ENCODE measurements at regions of chr16 and their contacts with region 1.

Region 1: DNA sequence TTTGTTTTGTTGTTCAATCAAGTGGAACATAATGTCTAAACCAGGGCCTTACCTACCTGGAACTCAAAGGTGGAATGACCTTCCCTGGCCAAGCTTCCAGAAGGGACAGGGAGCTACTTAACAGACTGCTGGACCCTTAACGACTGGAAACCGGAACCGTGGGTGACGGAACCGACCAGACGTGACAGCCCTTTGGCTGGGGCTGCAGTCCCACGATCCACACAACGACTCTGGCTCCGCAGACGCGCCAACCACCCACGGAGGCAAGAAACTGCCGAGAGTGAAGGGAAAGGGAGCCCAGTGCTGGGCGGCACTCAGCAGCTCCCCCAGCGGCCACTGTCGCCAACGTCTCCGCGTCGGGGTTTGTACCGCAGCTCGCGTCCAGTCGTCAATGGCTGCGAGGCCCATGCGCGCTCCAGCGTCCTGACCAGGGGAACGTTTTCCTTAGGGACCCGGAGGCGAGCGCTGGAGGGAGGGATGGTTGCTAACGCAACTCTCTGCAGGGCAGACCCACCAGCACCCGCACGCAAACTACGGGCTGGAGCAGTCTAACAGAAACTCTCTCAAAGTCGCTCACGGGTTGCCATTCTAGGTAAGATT is 5.5 kb upstream of the KIF22 start:
- DNase-seq: peak; percentile 55 to 79 (median 62)
- H3K4me3 ChIP-seq: peak overlapping the region; percentile 33
- H3K4me3 Mint-ChIP-seq: peak overlapping the region; percentile 50 to 77 (median 69)
- H3K27ac ChIP-seq: no peak overlapping the region
- H3K27ac Mint-ChIP-seq: peak overlapping the region in 7 of 8 donors; percentile 47 to 83 (median 74)
- H3K4me1 ChIP-seq: peaks cover 20% of the 10 kb centered on the region
- H3K4me1 Mint-ChIP-seq: peaks cover 17 to 28% (median 27%) of the 10 kb centered on the region in 3 donors
- H3K27me3 ChIP-seq: no peaks in the 10 kb centered on the region
- H3K27me3 Mint-ChIP-seq: peaks cover 0 to 3% of the 10 kb centered on the region in 2 donors

Region 2: DNA sequence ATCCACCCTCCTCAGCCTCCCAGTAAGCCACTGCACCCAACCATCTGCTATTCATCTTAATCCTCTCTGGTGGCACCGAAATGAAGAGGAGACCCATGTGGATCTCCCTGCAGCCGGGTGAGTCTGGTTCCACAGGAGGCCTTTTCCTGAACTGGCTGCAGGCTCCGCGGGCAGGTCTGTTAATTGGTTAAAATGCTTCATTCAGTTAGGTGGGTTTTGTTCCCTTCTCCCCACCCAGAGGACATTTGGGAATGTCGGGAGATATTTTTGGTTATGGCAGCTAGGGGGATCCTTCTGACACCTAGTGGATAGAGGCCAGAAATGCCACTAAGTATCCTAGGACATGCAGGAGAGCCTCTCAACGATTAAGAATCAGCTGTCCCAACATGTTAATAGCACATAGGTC is 55.9 kb before region 1 on chr16:
- CTCF ChIA-PET with region 1: interaction called, 28 read pairs
- POLR2A ChIA-PET with region 1: interaction called, 4 read pairs
- DNase-seq: no peak
- H3K4me3 ChIP-seq: no peak overlapping the region
- H3K4me3 Mint-ChIP-seq: peak overlapping the region in 1 of 7 donors; percentile 46
- H3K27ac ChIP-seq: no peak overlapping the region
- H3K27ac Mint-ChIP-seq: no peak overlapping the region
- H3K4me1 ChIP-seq: peaks cover 9% of the 10 kb centered on the region
- H3K4me1 Mint-ChIP-seq: peaks cover 19 to 30% (median 30%) of the 10 kb centered on the region in 3 donors
- H3K27me3 ChIP-seq: no peaks in the 10 kb centered on the region
- H3K27me3 Mint-ChIP-seq: peaks cover 0 to 1% of the 10 kb centered on the region in 2 donors

Region 3: DNA sequence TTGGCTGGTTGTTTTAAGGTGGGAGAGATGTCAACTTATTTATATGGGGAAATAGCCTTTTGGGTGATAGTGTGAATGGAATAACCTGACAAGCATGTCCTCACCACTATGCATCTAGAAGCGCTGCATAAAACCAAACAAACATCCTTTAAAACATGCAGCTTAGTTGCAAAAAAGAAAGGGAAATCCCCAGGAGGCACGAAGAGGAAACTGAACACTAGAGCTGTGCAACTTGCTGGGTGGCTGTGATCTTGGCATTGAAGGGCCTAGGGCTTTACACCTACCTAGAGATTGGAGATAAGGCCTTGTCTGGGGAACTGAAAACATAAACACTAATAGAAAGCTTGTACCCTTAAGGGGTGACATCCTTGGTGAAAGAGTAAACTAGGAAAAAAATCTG is 46.5 kb before region 1 on chr16:
- CTCF ChIA-PET with region 1: interaction called, 28 read pairs
- POLR2A ChIA-PET with region 1: interaction called, 24 read pairs
- DNase-seq: peak; percentile 35 to 80 (median 79)
- H3K4me3 ChIP-seq: no peak overlapping the region
- H3K4me3 Mint-ChIP-seq: peak overlapping the region; percentile 24 to 78 (median 67)
- H3K27ac ChIP-seq: peak overlapping the region; percentile 21
- H3K27ac Mint-ChIP-seq: peak overlapping the region; percentile 89 to 98 (median 96)
- H3K4me1 ChIP-seq: peaks cover 78% of the 10 kb centered on the region
- H3K4me1 Mint-ChIP-seq: peaks cover 78 to 85% (median 82%) of the 10 kb centered on the region in 3 donors
- H3K27me3 ChIP-seq: no peaks in the 10 kb centered on the region
- H3K27me3 Mint-ChIP-seq: no peaks in the 10 kb centered on the region

Region 4: GRCh38 chr16:29757950-29758466 is 27.0 kb before region 1 on chr16:
- CTCF ChIA-PET with region 1: interaction called, 14 read pairs
- POLR2A ChIA-PET with region 1: interaction called, 4 read pairs
- DNase-seq: no peak
- H3K4me3 ChIP-seq: no peak overlapping the region
- H3K4me3 Mint-ChIP-seq: no peak overlapping the region
- H3K27ac ChIP-seq: no peak overlapping the region
- H3K27ac Mint-ChIP-seq: no peak overlapping the region
- H3K4me1 ChIP-seq: peaks cover 22% of the 10 kb centered on the region
- H3K4me1 Mint-ChIP-seq: peaks cover 9 to 33% (median 19%) of the 10 kb centered on the region in 3 donors
- H3K27me3 ChIP-seq: no peaks in the 10 kb centered on the region
- H3K27me3 Mint-ChIP-seq: no peaks in the 10 kb centered on the region

Region 5: DNA sequence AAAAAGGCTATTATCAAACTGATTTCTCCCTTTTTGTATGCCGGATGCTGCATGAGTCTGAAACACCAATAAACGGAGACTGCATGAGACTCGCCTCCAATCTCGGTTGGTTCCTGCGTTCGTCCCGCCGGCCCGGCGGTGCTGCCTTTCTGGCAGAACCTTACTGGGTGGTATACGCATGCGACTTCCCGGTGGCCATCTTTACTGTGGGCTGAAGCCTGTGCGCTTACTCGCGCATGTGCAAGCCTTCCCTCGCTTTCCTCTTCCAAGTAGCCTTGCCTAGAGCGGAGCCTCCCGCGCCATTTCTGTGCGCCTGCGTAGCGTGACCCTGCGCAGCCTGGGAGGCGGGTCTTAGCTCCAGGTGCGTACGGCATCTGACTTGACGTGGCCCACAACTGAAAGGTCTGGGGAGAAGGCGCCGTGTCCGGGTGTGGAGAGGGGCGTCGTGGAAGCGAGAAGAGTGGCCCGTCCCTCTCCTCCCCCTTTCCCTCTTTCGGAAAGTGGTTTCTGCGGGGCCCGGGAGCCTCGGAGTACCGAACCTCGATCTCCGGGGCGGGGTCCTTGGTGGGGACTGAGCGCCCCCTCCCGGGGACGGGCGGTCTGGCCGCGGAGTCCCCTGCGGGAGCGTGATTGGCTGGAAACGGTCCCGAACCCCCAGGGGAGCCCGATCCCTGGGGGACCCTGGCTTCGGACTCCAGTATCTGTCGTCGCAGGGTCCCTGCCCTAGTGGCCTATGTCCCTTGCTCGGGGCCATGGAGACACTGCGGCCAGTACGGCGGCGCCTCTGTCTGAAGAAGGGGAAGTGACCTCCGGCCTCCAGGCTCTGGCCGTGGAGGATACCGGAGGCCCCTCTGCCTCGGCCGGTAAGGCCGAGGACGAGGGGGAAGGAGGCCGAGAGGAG is 31.0 kb after region 1 on chr16 and contains the start of gene PAGR1:
- CTCF ChIA-PET with region 1: interaction called, 20 read pairs
- POLR2A ChIA-PET with region 1: interaction called, 46 read pairs
- DNase-seq: peak; percentile 95 to 99 (median 99)
- H3K4me3 ChIP-seq: peak within 1 kb of the TSS; percentile 94
- H3K4me3 Mint-ChIP-seq: peak within 1 kb of the TSS; percentile 89 to 99 (median 93)
- H3K27ac ChIP-seq: peak within 1 kb of the TSS; percentile 89
- H3K27ac Mint-ChIP-seq: peak within 1 kb of the TSS; percentile 93 to 99 (median 98)
- H3K4me1 ChIP-seq: peaks cover 54% of the 10 kb centered on the region
- H3K4me1 Mint-ChIP-seq: peaks cover 53 to 79% (median 62%) of the 10 kb centered on the region in 3 donors
- H3K27me3 ChIP-seq: no peaks in the 10 kb centered on the region
- H3K27me3 Mint-ChIP-seq: peaks cover 0 to 4% of the 10 kb centered on the region in 2 donors
- total RNA-seq, gene PAGR1: 41.9 to 44.3 TPM

Region 6: DNA sequence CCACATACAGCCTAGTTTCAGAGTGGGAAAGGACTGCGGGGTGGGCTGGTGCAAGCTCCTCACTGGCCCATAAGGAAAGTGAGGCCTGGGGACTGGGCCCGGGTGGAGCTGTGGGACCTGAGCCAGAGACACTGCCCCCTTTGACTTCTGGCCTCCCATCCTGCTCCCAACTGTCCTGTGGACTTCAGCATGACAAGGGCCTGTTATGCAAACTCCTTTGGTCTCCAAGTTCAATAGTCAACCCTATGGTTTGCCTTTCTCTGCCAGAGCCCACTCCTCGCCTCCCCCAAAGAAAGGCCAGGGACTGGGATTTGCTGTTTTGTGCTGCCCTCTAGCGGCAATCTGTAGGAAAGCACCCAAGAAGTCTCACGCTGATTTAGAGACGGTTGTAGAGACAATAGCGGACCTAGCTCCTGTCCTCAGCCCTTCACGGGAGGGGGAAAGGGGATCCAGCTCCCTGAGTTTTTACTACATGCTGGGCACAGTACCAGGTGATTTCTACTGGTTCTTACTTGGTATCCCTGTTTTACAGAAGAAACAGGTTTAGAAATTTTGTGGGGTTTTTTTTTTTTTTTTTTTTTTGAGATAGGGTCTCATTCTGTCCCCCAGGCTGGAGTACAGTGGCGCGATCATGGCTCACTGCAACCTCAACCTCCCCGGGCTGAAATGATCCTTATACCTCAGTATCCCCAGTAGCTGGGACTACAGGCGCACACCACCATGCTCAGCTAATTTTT is 247.2 kb after region 1 on chr16:
- CTCF ChIA-PET with region 1: no interaction called
- POLR2A ChIA-PET with region 1: no interaction called
- DNase-seq: peak; percentile 38 to 70 (median 53)
- H3K4me3 ChIP-seq: no peak overlapping the region
- H3K4me3 Mint-ChIP-seq: peak overlapping the region in 5 of 7 donors; percentile 34 to 75 (median 54)
- H3K27ac ChIP-seq: no peak overlapping the region
- H3K27ac Mint-ChIP-seq: peak overlapping the region in 2 of 8 donors; percentile 43 to 64
- H3K4me1 ChIP-seq: peaks cover 4% of the 10 kb centered on the region
- H3K4me1 Mint-ChIP-seq: peaks cover 0 to 10% (median 5%) of the 10 kb centered on the region in 3 donors
- H3K27me3 ChIP-seq: peaks cover 44% of the 10 kb centered on the region
- H3K27me3 Mint-ChIP-seq: peaks cover 35 to 59% of the 10 kb centered on the region in 2 donors

Measured in CD8-positive, alpha-beta memory T cell (primary cell).